ENCODE measurements at regions of chr5 and their contacts with region 1.

Region 1: GRCh38 chr5:176647030-176647866 is at the start of gene TSPAN17:
- DNase-seq: peak; percentile 100
- H3K4me3 ChIP-seq: peak within 1 kb of the TSS; percentile 72
- H3K4me3 Mint-ChIP-seq: peak within 1 kb of the TSS; percentile 71
- H3K27ac Mint-ChIP-seq: peak within 1 kb of the TSS; percentile 63
- H3K4me1 ChIP-seq: peaks cover 10% of the 10 kb centered on the region
- H3K4me1 Mint-ChIP-seq: no peaks in the 10 kb centered on the region
- H3K27me3 ChIP-seq: no peaks in the 10 kb centered on the region
- H3K27me3 Mint-ChIP-seq: no peaks in the 10 kb centered on the region
- CTCF ChIP-seq: no peak
- total RNA-seq, gene TSPAN17: 19.6 and 20.5 TPM in 2 replicates

Region 2: GRCh38 chr5:176503496-176503895 is 143.8 kb before region 1 on chr5:
- CTCF ChIA-PET with region 1: no interaction called
- POLR2A ChIA-PET with region 1: interaction called, 10 read pairs
- intact Hi-C with region 1: no loop called
- DNase-seq: peak in 1 of 2 experiments; percentile 15
- H3K4me3 ChIP-seq: no peak overlapping the region
- H3K4me3 Mint-ChIP-seq: no peak overlapping the region
- H3K27ac Mint-ChIP-seq: no peak overlapping the region
- H3K4me1 ChIP-seq: no peaks in the 10 kb centered on the region
- H3K4me1 Mint-ChIP-seq: no peaks in the 10 kb centered on the region
- H3K27me3 ChIP-seq: no peaks in the 10 kb centered on the region
- H3K27me3 Mint-ChIP-seq: no peaks in the 10 kb centered on the region
- CTCF ChIP-seq: no peak

Region 3: GRCh38 chr5:176609724-176610434 is 37.4 kb before region 1 on chr5 and contains the start of gene GPRIN1:
- CTCF ChIA-PET with region 1: no interaction called
- POLR2A ChIA-PET with region 1: no interaction called
- intact Hi-C with region 1: no loop called
- DNase-seq: peak in 1 of 2 experiments; percentile 88
- H3K4me3 ChIP-seq: peak within 1 kb of the TSS; percentile 60
- H3K4me3 Mint-ChIP-seq: peak within 1 kb of the TSS; percentile 83
- H3K27ac Mint-ChIP-seq: no peak within 1 kb of the TSS
- H3K4me1 ChIP-seq: 0 out of 2 replicates have a peak, but pooled peaks cover 6% of the 10 kb centered on the region
- H3K4me1 Mint-ChIP-seq: peaks cover 8% of the 10 kb centered on the region
- H3K27me3 ChIP-seq: no peaks in the 10 kb centered on the region
- H3K27me3 Mint-ChIP-seq: peaks cover 10% of the 10 kb centered on the region
- CTCF ChIP-seq: peak in 1 of 2 experiments; percentile 21
- total RNA-seq, gene GPRIN1: 3.9 and 5.2 TPM in 2 replicates